ENCODE measurements at regions of chr3 and their contacts with region 1.

Region 1: DNA sequence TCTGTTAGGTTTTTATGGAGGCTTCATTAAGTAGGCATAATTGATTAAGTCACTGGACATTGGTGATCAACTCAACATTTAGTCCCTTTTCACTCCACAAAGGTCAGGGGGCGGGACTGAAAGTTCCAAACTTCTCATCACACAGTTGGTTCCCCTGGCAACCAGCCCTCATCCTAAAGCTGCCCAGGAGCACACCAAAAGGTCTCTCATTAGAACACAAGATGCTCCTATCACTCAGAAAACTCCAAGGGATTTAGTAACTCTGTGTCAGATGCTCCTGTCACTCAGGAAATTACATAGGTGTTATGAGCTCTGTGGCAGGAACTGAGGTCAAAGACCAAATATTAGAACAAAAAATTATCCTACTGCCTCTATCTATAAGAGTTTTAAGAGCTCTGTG is 321.5 kb downstream of the OTOL1 start:
- DNase-seq: no peak
- ATAC-seq: no peak
- H3K4me3 ChIP-seq: no peak overlapping the region
- H3K4me3 Mint-ChIP-seq: no peak overlapping the region
- H3K27ac ChIP-seq: no peak overlapping the region
- H3K27ac Mint-ChIP-seq: no peak overlapping the region
- H3K4me1 ChIP-seq: no peaks in the 10 kb centered on the region
- H3K4me1 Mint-ChIP-seq: no peaks in the 10 kb centered on the region
- H3K27me3 ChIP-seq: no peaks in the 10 kb centered on the region
- H3K27me3 Mint-ChIP-seq: no peaks in the 10 kb centered on the region
- CTCF ChIP-seq: no peak

Region 2: GRCh38 chr3:161474182-161475140 is 343.6 kb before region 1 on chr3:
- CTCF ChIA-PET with region 1: no interaction called
- POLR2A ChIA-PET with region 1: no interaction called
- intact Hi-C with region 1: loop called in 1 of 2 experiments (anchors 5 kb)
- DNase-seq: no peak
- ATAC-seq: no peak
- H3K4me3 ChIP-seq: no peak overlapping the region
- H3K4me3 Mint-ChIP-seq: no peak overlapping the region
- H3K27ac ChIP-seq: no peak overlapping the region
- H3K27ac Mint-ChIP-seq: no peak overlapping the region
- H3K4me1 ChIP-seq: no peaks in the 10 kb centered on the region
- H3K4me1 Mint-ChIP-seq: no peaks in the 10 kb centered on the region
- H3K27me3 ChIP-seq: no peaks in the 10 kb centered on the region
- H3K27me3 Mint-ChIP-seq: peaks cover 15% of the 10 kb centered on the region
- CTCF ChIP-seq: no peak